CD4-positive, alpha-beta T cell (primary cell): ENCODE measurements at regions of chr17 and their contacts with region 1.

Region 1: DNA sequence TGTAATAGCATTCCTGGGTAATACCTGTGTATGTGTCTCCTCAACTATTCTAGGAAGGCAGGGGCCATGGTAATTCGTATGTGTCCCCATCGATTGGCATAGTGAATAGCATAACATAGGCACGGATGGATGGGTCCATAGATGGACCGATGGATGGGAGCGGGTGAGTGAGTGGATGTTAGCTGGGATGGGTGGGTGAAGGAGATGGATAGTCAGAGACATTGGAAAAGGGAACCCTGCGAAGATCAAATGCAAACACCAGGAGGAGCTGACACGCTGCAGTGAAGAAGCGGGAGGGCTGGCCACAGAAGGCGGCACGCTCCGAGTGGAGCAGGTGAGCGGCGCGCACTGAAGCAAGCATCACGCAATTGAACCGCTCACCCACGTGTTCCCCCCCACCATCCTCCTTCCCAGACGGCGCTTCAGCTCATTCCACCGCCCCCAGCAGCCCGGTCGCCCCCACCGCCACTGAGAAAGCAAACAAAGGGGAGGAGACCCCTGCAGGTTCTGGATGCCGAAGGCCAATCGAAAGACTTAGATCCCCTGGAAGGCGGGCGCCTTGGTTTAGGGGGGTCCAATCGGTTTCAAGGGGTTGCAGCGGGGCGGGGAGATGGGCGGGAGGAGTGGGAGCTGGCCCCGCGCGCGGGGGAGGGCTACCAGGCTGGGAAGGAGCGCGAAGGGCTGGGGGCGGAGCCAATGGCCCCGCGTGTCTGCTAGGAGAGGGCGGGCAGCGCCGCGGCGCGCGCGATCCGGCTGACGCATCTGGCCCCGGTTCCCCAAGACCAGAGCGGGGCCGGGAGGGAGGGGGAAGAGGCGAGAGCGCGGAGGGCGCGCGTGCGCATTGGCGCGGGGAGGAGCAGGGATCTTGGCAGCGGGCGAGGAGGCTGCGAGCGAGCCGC is at the start of gene ARRB2:
- DNase-seq: peak; percentile 97 to 100 (median 99)
- ATAC-seq: peak; percentile 79
- H3K4me3 ChIP-seq: peak within 1 kb of the TSS; percentile 90
- H3K4me3 Mint-ChIP-seq: peak within 1 kb of the TSS; percentile 98
- H3K27ac ChIP-seq: peak within 1 kb of the TSS; percentile 82 to 92
- H3K27ac Mint-ChIP-seq: peak within 1 kb of the TSS; percentile 83
- H3K4me1 ChIP-seq: peaks cover 52% of the 10 kb centered on the region
- H3K4me1 Mint-ChIP-seq: peaks cover 59% of the 10 kb centered on the region
- H3K27me3 ChIP-seq: no peaks in the 10 kb centered on the region
- H3K27me3 Mint-ChIP-seq: no peaks in the 10 kb centered on the region
- CTCF ChIP-seq: peak; percentile 86
- total RNA-seq, gene ARRB2: 210 to 220 TPM

Region 2: GRCh38 chr17:4739122-4740024 is 29.3 kb after region 1 on chr17 and contains the starts of genes CXCL16 and ZMYND15:
- CTCF ChIA-PET with region 1: interaction called, 10 read pairs
- POLR2A ChIA-PET with region 1: interaction called, 4 read pairs
- intact Hi-C with region 1: no loop called
- DNase-seq: peak in 13 of 14 experiments; percentile 40 to 89 (median 59)
- ATAC-seq: peak; percentile 70
- H3K4me3 ChIP-seq: peak within 1 kb of the TSS; percentile 72
- H3K4me3 Mint-ChIP-seq: peak within 1 kb of the TSS; percentile 97
- H3K27ac ChIP-seq: no peak within 1 kb of the TSS
- H3K27ac Mint-ChIP-seq: peak within 1 kb of the TSS; percentile 89
- H3K4me1 ChIP-seq: peaks cover 24% of the 10 kb centered on the region
- H3K4me1 Mint-ChIP-seq: peaks cover 23% of the 10 kb centered on the region
- H3K27me3 ChIP-seq: peaks cover 6 to 20% of the 10 kb centered on the region in 2 experiments
- H3K27me3 Mint-ChIP-seq: peaks cover 25% of the 10 kb centered on the region
- CTCF ChIP-seq: no peak
- total RNA-seq, gene CXCL16: 24.8 to 25.8 TPM
- total RNA-seq, gene ZMYND15: 3.1 to 3.3 TPM

Region 3: GRCh38 chr17:4806777-4807604 is 96.9 kb after region 1 on chr17 and contains the start of gene PLD2:
- CTCF ChIA-PET with region 1: interaction called, 3 read pairs
- POLR2A ChIA-PET with region 1: interaction called, 3 read pairs
- intact Hi-C with region 1: loop called in 1 of 2 experiments (anchors 2 kb)
- DNase-seq: peak; percentile 68 to 94 (median 84)
- ATAC-seq: peak; percentile 98
- H3K4me3 ChIP-seq: peak within 1 kb of the TSS; percentile 57
- H3K4me3 Mint-ChIP-seq: peak within 1 kb of the TSS; percentile 87
- H3K27ac ChIP-seq: no peak within 1 kb of the TSS
- H3K27ac Mint-ChIP-seq: no peak within 1 kb of the TSS
- H3K4me1 ChIP-seq: peaks cover 12% of the 10 kb centered on the region
- H3K4me1 Mint-ChIP-seq: peaks cover 21% of the 10 kb centered on the region
- H3K27me3 ChIP-seq: no peaks in the 10 kb centered on the region
- H3K27me3 Mint-ChIP-seq: no peaks in the 10 kb centered on the region
- CTCF ChIP-seq: no peak
- total RNA-seq, gene PLD2: 10.2 to 10.7 TPM

Region 4: DNA sequence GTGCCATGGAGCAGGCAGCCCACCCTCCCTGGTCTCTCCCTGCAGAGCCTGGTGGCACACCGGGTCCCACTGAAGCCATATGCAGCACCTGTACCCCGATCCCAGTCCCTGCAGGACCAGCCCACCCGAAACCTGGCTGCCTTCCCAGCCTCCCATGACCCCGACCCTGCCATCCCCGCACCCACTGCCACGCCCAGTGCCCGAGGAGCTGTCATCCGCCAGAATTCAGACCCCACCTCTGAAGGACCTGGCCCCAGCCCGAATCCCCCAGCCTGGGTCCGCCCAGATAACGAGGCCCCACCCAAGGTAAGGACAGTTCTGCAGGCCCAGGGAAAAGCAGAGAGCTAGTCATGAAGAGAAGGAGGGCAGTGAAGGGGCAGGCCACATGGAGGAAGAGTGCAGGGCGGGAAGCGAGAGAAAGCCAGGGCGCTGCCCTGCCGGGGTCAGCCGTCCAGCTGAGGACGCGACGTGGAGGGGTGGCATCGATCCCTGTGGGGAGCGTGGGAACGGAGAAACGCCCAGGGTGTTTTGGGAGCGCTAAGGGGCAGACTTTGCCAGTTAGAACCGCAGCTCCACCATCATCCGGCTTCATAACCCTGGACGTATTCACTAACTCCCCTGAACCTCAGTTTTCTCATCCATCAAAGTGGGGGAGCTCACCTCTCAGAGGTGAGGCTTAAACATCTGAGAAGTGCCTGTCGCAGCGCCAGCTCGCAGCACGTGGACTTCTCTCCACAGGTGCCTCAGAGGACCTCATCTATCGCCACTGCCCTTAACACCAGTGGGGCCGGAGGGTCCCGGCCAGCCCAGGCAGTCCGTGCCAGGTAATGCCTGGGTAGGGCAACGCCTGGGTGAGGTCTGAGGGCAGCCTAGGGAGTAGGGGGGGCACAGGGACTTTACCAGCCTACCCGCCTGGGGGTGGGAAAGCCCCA is 181.6 kb after region 1 on chr17:
- CTCF ChIA-PET with region 1: interaction called, 6 read pairs
- POLR2A ChIA-PET with region 1: interaction called, 4 read pairs
- intact Hi-C with region 1: loop called (anchors 1 kb)
- DNase-seq: peak in 1 of 14 experiments; percentile 31
- ATAC-seq: no peak
- H3K4me3 ChIP-seq: no peak overlapping the region
- H3K4me3 Mint-ChIP-seq: no peak overlapping the region
- H3K27ac ChIP-seq: no peak overlapping the region
- H3K27ac Mint-ChIP-seq: no peak overlapping the region
- H3K4me1 ChIP-seq: peaks cover 2% of the 10 kb centered on the region
- H3K4me1 Mint-ChIP-seq: peaks cover 5% of the 10 kb centered on the region
- H3K27me3 ChIP-seq: no peaks in the 10 kb centered on the region
- H3K27me3 Mint-ChIP-seq: no peaks in the 10 kb centered on the region
- CTCF ChIP-seq: no peak

Region 5: GRCh38 chr17:4948931-4949320 is 238.9 kb after region 1 on chr17:
- CTCF ChIA-PET with region 1: no interaction called
- POLR2A ChIA-PET with region 1: interaction called, 7 read pairs
- intact Hi-C with region 1: loop called (anchors 5 kb)
- DNase-seq: peak in 13 of 14 experiments; percentile 36 to 89 (median 66)
- ATAC-seq: peak; percentile 32
- H3K4me3 ChIP-seq: peak overlapping the region; percentile 99
- H3K4me3 Mint-ChIP-seq: peak overlapping the region; percentile 99
- H3K27ac ChIP-seq: peak overlapping the region; percentile 84 to 98
- H3K27ac Mint-ChIP-seq: peak overlapping the region; percentile 90
- H3K4me1 ChIP-seq: peaks cover 45% of the 10 kb centered on the region
- H3K4me1 Mint-ChIP-seq: peaks cover 51% of the 10 kb centered on the region
- H3K27me3 ChIP-seq: no peaks in the 10 kb centered on the region
- H3K27me3 Mint-ChIP-seq: no peaks in the 10 kb centered on the region
- CTCF ChIP-seq: no peak